H1 (cell line): ENCODE measurements at regions of chr6 and their contacts with region 1.

Region 1: DNA sequence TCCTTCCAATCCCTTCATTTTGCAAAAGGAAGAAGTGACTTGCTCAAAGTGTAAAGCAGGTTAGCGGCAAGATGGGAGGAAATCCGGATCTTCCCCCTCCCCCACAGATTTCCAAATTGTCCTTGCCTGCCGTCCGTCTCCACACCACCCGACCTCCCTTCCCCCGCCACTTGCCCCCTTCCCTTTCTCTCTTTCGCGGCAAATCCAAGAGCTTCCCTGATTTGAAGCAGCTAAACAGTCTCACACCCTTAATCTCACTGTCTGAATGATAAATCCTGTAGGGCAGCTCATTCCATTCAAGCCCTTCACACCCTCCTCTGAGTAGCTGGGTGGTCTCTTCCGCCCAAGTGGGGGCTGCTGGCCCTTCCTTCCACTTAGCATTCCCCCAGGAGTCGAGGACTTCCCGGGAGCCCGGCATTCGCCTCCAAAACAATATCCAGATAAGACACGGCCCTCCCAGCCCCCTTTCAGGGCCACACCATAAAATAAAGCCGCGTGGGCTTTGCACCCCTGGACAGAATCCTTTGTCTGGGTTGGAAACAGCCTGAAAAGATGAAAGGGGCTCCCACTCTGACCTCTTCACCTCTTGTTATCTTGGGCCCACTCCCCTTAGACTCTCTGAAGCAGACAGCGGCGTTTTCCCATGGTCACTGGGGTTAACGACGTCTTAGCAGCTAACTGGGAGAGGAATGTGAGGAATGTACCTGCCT is 44.0 kb upstream of the PIM1 start:
- DNase-seq: peak; percentile 74 to 81
- H3K4me3 ChIP-seq: peak overlapping the region; percentile 12 to 58 (median 39); a peak in 7 of 8 replicates
- H3K27ac ChIP-seq: peak overlapping the region; percentile 94
- H3K4me1 ChIP-seq: peaks cover 19 to 42% (median 31%) of the 10 kb centered on the region in 4 experiments
- H3K27me3 ChIP-seq: no peaks in the 10 kb centered on the region
- CTCF ChIP-seq: no peak
- EP300 ChIP-seq: peak in 1 of 2 experiments; percentile 26; a peak in 1 of 3 replicates
- POLR2A ChIP-seq: peak in 1 of 2 experiments; percentile 53; a peak in 2 of 3 replicates
- RAD21 ChIP-seq: peak in 1 of 2 experiments; percentile 0; a peak in 1 of 4 replicates

Region 2: GRCh38 chr6:37110500-37111461 is 15.2 kb before region 1 on chr6:
- CTCF ChIA-PET with region 1: interaction called, 5 read pairs
- POLR2A ChIA-PET with region 1: interaction called, 496 read pairs
- DNase-seq: no peak
- H3K4me3 ChIP-seq: no peak overlapping the region
- H3K27ac ChIP-seq: no peak overlapping the region
- H3K4me1 ChIP-seq: no peaks in the 10 kb centered on the region; a peak in 3 of 7 replicates
- H3K27me3 ChIP-seq: no peaks in the 10 kb centered on the region
- CTCF ChIP-seq: no peak
- EP300 ChIP-seq: no peak
- POLR2A ChIP-seq: no peak
- RAD21 ChIP-seq: no peak